ENCODE measurements at regions of chr18 and their contacts with region 1.

Region 1: GRCh38 chr18:69908838-69909237 is 38.8 kb downstream of the CD226 start:
- DNase-seq: no peak
- CTCF ChIP-seq: no peak

Region 2: GRCh38 chr18:69898241-69898861 is 10.5 kb before region 1 on chr18:
- CTCF ChIA-PET with region 1: interaction called, 10 read pairs
- POLR2A ChIA-PET with region 1: no interaction called
- DNase-seq: peak; percentile 35
- CTCF ChIP-seq: no peak